Activated B cell treated with CpG ODN at 0.5 μM for 24 hours (primary cell): ENCODE measurements at regions of chr1 and their contacts with region 1.

Region 1: GRCh38 chr1:75265792-75266191 is 131.6 kb downstream of the LHX8 start:
- DNase-seq: no peak
- ATAC-seq: peak; percentile 37
- H3K4me3 Mint-ChIP-seq: no peak overlapping the region
- H3K27ac Mint-ChIP-seq: no peak overlapping the region
- H3K4me1 Mint-ChIP-seq: peaks cover 20% of the 10 kb centered on the region
- H3K27me3 Mint-ChIP-seq: no peaks in the 10 kb centered on the region
- CTCF ChIP-seq: no peak

Region 2: GRCh38 chr1:75276385-75276784 is 10.6 kb after region 1 on chr1:
- CTCF ChIA-PET with region 1: interaction called, 14 read pairs
- POLR2A ChIA-PET with region 1: no interaction called
- intact Hi-C with region 1: no loop called
- DNase-seq: no peak
- ATAC-seq: no peak
- H3K4me3 Mint-ChIP-seq: no peak overlapping the region
- H3K27ac Mint-ChIP-seq: no peak overlapping the region
- H3K4me1 Mint-ChIP-seq: no peaks in the 10 kb centered on the region
- H3K27me3 Mint-ChIP-seq: no peaks in the 10 kb centered on the region
- CTCF ChIP-seq: no peak

Region 3: DNA sequence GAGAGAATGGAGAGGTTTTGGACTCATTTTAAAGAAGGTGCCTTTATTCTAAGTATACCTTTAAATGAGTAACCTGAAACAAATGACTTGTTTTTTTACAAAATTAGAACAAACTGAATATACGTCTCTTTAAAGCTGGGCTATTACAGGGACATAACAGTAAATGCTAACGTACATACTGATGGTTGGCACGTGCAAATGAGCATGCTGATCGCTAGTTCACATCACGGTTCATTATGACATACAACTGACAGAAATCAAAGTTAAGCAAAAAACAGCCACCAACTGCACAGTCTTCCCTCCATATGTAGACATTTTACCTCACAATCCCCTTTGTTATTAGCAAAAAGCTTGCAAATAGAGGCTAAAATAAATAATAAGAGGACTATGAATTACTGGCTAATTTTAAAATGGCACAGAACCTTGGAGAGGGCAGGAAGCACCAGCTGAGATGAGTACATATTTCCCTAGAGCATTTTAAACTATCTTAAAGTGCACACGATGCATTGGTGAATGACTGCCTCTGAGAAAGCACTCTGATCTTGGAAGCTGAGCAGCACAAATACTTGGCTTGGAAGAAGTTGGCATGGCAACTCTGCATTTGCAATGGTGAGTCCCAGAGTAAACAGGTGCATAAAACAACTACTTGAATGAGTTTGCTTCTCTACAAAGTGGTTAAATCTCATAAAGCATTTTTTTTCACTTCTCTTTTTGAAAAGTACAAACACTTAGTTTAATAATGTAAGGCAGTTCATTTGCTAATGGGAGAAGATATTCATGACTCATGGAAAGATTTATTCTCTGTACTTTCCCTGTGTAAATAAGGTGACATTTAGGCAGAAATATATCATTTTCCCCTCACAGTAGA is 73.1 kb after region 1 on chr1:
- CTCF ChIA-PET with region 1: no interaction called
- POLR2A ChIA-PET with region 1: no interaction called
- intact Hi-C with region 1: loop called (anchors 5 kb)
- DNase-seq: no peak
- ATAC-seq: peak; percentile 71
- H3K4me3 Mint-ChIP-seq: no peak overlapping the region
- H3K27ac Mint-ChIP-seq: peak overlapping the region; percentile 54
- H3K4me1 Mint-ChIP-seq: peaks cover 39% of the 10 kb centered on the region
- H3K27me3 Mint-ChIP-seq: no peaks in the 10 kb centered on the region
- CTCF ChIP-seq: no peak

Region 4: GRCh38 chr1:75373533-75374320 is 107.9 kb after region 1 on chr1:
- CTCF ChIA-PET with region 1: no interaction called
- POLR2A ChIA-PET with region 1: no interaction called
- intact Hi-C with region 1: loop called (anchors 10 kb)
- DNase-seq: no peak
- ATAC-seq: no peak
- H3K4me3 Mint-ChIP-seq: no peak overlapping the region
- H3K27ac Mint-ChIP-seq: no peak overlapping the region
- H3K4me1 Mint-ChIP-seq: peaks cover 3% of the 10 kb centered on the region
- H3K27me3 Mint-ChIP-seq: no peaks in the 10 kb centered on the region
- CTCF ChIP-seq: no peak

Region 5: DNA sequence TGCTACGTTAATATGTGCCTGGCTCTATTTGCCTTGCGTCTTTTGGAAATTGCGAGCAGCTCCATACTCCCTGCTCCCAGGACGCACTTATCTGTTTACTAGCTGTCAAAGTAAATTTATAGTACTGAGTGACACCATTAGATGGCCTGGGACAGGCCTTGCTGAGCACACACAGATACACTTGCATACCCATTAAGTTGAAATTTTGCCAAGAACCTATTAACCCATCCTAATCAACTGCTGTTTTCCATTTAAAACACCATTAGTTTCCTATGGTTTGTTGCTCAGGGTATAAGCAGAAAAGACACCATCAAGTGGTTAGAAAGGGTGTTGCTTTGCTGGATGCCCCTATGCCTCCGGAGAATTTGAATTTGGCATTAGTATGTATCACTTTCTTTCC is 157.8 kb after region 1 on chr1:
- CTCF ChIA-PET with region 1: interaction called, 5 read pairs
- POLR2A ChIA-PET with region 1: no interaction called
- intact Hi-C with region 1: loop called (anchors 5 kb)
- DNase-seq: no peak
- ATAC-seq: no peak
- H3K4me3 Mint-ChIP-seq: no peak overlapping the region
- H3K27ac Mint-ChIP-seq: no peak overlapping the region
- H3K4me1 Mint-ChIP-seq: no peaks in the 10 kb centered on the region
- H3K27me3 Mint-ChIP-seq: no peaks in the 10 kb centered on the region
- CTCF ChIP-seq: no peak

Region 6: DNA sequence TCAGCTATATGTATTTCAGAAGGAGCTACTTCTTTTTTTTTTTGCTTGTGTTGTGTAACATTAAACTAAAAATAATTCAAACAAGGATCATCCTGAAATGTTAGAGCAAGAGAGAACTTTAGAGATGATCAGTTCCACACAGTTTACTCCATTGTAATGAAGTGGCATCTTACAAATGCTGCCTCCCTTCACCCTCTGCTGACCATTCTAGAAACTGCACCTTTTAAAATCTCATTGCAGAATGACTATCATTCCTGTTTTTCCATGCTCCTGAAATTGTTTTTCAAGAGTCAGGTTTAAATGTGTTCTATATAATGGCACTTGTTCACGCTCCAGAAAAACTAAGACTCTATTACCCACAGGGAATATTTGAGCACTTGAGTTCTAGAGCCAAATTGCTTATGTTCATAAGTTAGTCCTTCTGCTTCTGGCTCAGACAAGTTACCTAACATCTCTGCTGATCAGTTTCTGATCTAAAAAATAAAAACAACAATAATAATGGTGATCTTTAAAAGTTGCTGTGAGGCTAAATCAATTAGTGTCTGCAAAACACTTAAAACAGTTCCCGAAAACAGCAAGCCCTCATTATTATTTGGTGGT is 366.7 kb after region 1 on chr1:
- CTCF ChIA-PET with region 1: interaction called, 5 read pairs
- POLR2A ChIA-PET with region 1: no interaction called
- intact Hi-C with region 1: loop called (anchors 1 kb)
- DNase-seq: no peak
- ATAC-seq: no peak
- H3K4me3 Mint-ChIP-seq: no peak overlapping the region
- H3K27ac Mint-ChIP-seq: no peak overlapping the region
- H3K4me1 Mint-ChIP-seq: no peaks in the 10 kb centered on the region
- H3K27me3 Mint-ChIP-seq: peaks cover 9% of the 10 kb centered on the region
- CTCF ChIP-seq: no peak